ENCODE measurements at regions of chr2 and their contacts with region 1.

Region 1: GRCh38 chr2:71510196-71510807 is 56.9 kb downstream of the DYSF start:
- DNase-seq: no peak

Region 2: DNA sequence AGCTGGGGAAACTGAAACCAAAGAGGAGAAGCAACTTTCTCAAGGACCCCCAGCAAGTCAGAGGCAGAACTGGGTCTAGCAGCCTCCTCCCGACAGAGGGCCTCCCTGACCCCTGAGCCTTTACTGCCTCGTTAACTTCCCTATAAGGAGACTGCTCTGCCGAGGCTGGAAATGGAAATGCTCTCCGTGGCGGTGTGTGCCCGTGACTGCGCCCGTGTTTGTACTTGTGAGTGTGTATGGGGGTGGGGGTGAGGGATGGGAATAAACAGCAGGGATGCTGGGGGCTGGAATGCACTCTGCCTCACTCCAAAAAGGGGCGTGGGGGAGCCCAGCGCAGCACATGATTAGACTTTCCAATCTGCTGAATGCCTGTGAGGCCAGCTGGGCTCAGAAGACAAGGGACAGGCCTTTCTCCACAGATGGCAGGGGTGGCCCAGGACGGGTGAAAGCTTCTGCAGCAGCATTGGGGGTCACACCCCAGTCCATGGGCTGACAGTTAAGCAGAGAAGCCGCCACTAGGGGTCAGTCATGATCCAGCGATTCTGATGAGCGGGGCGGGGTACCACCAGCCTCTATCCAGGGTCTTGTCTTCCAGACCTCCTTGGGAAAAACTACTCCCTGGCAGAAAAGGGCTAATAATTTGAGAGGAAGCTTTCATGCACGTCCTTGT is 353.0 kb before region 1 on chr2:
- intact Hi-C with region 1: loop called (anchors 10 kb)
- DNase-seq: no peak

Region 3: GRCh38 chr2:71299507-71299906 is 210.8 kb before region 1 on chr2:
- intact Hi-C with region 1: loop called (anchors 2 kb)
- DNase-seq: no peak

Region 4: GRCh38 chr2:71460595-71461303 is 49.6 kb before region 1 on chr2:
- intact Hi-C with region 1: loop called (anchors 1 kb)
- DNase-seq: peak; percentile 71

Region 5: DNA sequence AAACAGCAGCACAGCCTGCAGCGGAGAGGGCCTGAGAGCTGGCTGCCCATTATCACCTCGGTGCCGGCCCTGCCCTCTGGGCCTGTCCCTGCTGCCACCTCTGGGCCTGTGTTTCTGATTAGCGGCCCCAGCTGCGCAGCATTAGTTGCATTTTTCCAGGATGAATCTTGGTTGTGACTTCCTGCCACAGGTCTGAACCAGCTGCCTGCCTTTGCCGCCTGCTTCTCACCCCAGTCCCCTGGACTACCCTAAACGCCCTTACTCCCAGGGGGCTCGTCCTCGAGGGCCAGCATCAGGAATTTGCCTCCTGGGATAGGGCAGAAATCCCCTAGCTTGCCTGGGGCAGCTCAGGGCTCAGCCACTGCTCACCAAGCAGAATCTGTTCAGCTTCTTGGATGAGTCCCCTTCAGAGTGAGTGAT is 285.9 kb after region 1 on chr2:
- intact Hi-C with region 1: no loop called
- DNase-seq: peak; percentile 76

Measured in cardiac septum (tissue), 1 donor.